ENCODE measurements at regions of chr10 and their contacts with region 1.

Region 1: DNA sequence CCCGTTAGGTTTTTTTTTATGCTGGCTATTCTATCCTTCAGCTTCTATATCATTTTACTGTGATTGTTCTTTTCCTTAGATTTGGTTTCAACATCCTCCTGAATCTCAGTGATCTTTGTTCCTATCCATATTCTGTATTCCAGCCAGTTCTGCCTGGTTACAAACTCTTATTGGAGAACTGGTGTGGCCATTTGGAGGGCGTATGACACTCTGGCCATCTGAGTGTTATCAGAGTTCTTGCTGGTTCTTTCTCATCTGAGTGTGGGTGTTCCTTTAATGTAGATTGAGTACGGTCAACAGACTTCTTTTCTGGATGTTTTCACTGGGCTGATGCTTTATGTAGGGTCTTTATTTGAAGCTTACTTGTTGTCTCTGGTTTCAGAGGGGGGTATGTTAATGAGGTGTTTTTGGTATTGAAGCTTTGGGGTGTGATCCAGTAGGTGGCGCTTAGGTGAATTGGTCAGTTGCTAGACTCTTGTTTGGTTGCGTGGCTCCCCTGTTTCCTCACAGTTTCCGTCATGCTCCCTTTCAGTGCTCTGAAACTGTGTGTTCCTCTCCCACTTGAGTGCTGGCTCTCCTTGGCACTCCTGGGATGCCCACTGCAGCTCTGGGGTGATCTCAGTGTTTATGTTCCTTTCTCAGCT is 80.7 kb downstream of the FANK1 start:
- DNase-seq: no peak
- H3K4me3 ChIP-seq: no peak overlapping the region
- H3K27ac ChIP-seq: no peak overlapping the region
- H3K4me1 ChIP-seq: peaks cover 0 to 8% (median under 1%) of the 10 kb centered on the region in 4 experiments; a peak in 4 of 7 replicates
- H3K27me3 ChIP-seq: no peaks in the 10 kb centered on the region
- CTCF ChIP-seq: peak; percentile 23 to 69 (median 63)
- EP300 ChIP-seq: no peak
- POLR2A ChIP-seq: no peak
- RAD21 ChIP-seq: peak; percentile 52 to 54

Region 2: GRCh38 chr10:125734823-125735222 is 242.3 kb before region 1 on chr10:
- CTCF ChIA-PET with region 1: no interaction called
- POLR2A ChIA-PET with region 1: no interaction called
- DNase-seq: no peak
- H3K4me3 ChIP-seq: no peak overlapping the region
- H3K27ac ChIP-seq: no peak overlapping the region
- H3K4me1 ChIP-seq: no peaks in the 10 kb centered on the region
- H3K27me3 ChIP-seq: no peaks in the 10 kb centered on the region
- CTCF ChIP-seq: peak in 1 of 3 experiments; percentile 29; a peak in 1 of 4 replicates
- EP300 ChIP-seq: no peak
- POLR2A ChIP-seq: no peak
- RAD21 ChIP-seq: no peak

Region 3: GRCh38 chr10:125868372-125868975 is 108.6 kb before region 1 on chr10:
- CTCF ChIA-PET with region 1: interaction called, 10 read pairs
- POLR2A ChIA-PET with region 1: interaction called, 3 read pairs
- DNase-seq: no peak
- H3K4me3 ChIP-seq: no peak overlapping the region
- H3K27ac ChIP-seq: no peak overlapping the region
- H3K4me1 ChIP-seq: no peaks in the 10 kb centered on the region
- H3K27me3 ChIP-seq: no peaks in the 10 kb centered on the region
- CTCF ChIP-seq: peak in 2 of 3 experiments; percentile 53 to 85; a peak in 3 of 4 replicates
- EP300 ChIP-seq: no peak
- POLR2A ChIP-seq: no peak
- RAD21 ChIP-seq: peak; percentile 86 to 88

Region 4: GRCh38 chr10:125990974-125991791 is 14.1 kb after region 1 on chr10:
- CTCF ChIA-PET with region 1: interaction called, 21 read pairs
- POLR2A ChIA-PET with region 1: no interaction called
- DNase-seq: no peak
- H3K4me3 ChIP-seq: no peak overlapping the region
- H3K27ac ChIP-seq: no peak overlapping the region
- H3K4me1 ChIP-seq: no peaks in the 10 kb centered on the region
- H3K27me3 ChIP-seq: no peaks in the 10 kb centered on the region
- CTCF ChIP-seq: no peak
- EP300 ChIP-seq: no peak
- POLR2A ChIP-seq: no peak
- RAD21 ChIP-seq: no peak

Region 5: GRCh38 chr10:126073606-126074005 is 96.5 kb after region 1 on chr10:
- CTCF ChIA-PET with region 1: no interaction called
- POLR2A ChIA-PET with region 1: no interaction called
- DNase-seq: no peak
- H3K4me3 ChIP-seq: no peak overlapping the region
- H3K27ac ChIP-seq: no peak overlapping the region
- H3K4me1 ChIP-seq: peaks cover 0 to under 1% (median 0%) of the 10 kb centered on the region in 4 experiments; a peak in 1 of 7 replicates
- H3K27me3 ChIP-seq: no peaks in the 10 kb centered on the region
- CTCF ChIP-seq: no peak
- EP300 ChIP-seq: no peak
- POLR2A ChIP-seq: no peak
- RAD21 ChIP-seq: no peak